Left cardiac atrium (tissue), 4 donors: ENCODE measurements at regions of chr5 and their contacts with region 1.

Region 1: GRCh38 chr5:154967421-154968024 is 26.6 kb downstream of the MRPL22 start:
- DNase-seq: no peak
- ATAC-seq: no peak

Region 2: DNA sequence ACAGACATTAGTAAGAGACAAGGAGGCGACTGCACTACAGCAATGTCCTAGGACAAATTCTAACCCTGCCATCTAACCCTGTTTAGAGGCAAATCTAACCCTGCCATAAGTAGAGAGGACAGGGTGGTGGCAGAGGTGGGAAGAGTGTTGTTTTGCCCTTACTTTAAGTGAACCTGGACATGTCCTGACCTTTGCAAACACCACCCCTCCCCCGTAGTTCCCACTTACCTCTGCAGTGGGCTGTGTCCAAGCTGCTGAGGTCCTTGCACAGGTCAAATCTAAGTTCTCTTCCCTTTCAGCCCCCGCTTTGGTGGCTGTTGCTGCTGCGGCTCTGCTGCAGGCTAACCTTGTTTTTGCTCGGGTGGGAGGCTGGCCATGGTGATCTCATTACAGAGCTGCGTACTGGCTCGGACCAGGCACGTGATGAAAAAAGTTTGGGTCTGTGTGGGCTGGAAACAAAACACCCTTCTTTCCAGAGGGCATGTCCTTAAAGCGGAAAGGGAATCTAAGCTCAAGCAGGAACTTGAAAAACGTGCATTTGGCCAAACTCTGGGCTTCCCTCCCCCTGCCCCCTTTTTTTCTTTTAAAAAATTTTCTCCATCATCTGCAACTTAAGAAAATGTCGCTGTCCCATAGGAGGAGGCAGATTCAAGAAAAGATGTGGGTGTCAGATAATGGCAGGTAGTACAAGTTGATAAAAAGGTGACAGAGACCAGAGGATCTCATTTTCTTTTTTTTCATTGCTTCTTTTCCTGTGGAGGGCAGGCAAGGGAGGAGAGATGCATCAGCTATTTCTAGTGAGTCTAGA is 117.1 kb before region 1 on chr5 and contains the start of gene FAXDC2:
- intact Hi-C with region 1: no loop called
- DNase-seq: peak; percentile 81
- ATAC-seq: peak; percentile 99
- total RNA-seq, gene FAXDC2: 10.1 to 28.2 TPM

Region 3: GRCh38 chr5:155004138-155004744 is 36.7 kb after region 1 on chr5:
- intact Hi-C with region 1: no loop called
- DNase-seq: peak; percentile 20
- ATAC-seq: no peak

Region 4: DNA sequence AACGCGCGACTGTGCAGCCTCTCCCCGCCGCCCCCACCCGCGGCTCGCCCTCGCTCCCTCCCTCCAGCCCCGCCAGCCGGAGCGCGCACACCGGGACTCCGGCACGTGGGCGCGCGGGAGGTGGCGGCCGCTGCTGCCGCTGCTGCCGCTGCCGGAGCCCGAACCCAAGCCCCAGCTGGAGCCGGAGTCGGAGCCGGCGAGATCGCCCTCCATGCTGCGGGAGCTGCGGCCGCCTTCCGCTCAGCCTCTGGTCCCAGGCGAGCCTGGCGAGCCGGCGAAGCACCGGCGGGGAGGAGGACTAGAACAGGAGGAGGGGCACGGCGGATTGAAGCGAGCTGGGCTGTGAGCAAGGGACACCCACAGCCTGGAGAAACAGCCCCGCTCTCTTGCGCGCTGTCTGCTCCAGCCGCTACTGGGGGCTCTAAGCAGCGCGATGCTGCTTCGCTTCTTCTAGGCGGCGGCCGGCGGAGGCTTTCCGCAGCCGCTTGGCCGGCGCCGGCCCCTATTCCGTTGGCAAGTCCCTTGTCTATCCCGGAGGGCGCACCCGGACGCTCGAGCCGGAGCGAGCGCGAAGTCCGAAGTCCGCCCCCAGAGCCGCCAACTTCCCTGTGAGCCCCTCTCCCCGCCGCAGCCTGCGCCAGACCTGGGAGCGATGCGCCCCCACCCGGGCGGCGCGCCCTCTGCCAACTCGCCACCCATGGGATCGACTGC is 760.8 kb after region 1 on chr5:
- intact Hi-C with region 1: loop called in 1 of 2 experiments (anchors 10 kb)
- DNase-seq: peak; percentile 73
- ATAC-seq: peak; percentile 72 to 74